ENCODE measurements at regions of chr17 and their contacts with region 1.

Region 1: GRCh38 chr17:74864866-74865395 is 5.2 kb upstream of the GRIN2C start:
- DNase-seq: peak; percentile 64 to 81
- H3K4me3 ChIP-seq: no peak overlapping the region
- H3K4me3 Mint-ChIP-seq: no peak overlapping the region
- H3K27ac Mint-ChIP-seq: no peak overlapping the region
- H3K4me1 ChIP-seq: peaks cover 31% of the 10 kb centered on the region
- H3K4me1 Mint-ChIP-seq: peaks cover 8% of the 10 kb centered on the region
- H3K27me3 ChIP-seq: peaks cover 6% of the 10 kb centered on the region
- H3K27me3 Mint-ChIP-seq: peaks cover 6% of the 10 kb centered on the region
- CTCF ChIP-seq: peak; percentile 93 to 97

Region 2: DNA sequence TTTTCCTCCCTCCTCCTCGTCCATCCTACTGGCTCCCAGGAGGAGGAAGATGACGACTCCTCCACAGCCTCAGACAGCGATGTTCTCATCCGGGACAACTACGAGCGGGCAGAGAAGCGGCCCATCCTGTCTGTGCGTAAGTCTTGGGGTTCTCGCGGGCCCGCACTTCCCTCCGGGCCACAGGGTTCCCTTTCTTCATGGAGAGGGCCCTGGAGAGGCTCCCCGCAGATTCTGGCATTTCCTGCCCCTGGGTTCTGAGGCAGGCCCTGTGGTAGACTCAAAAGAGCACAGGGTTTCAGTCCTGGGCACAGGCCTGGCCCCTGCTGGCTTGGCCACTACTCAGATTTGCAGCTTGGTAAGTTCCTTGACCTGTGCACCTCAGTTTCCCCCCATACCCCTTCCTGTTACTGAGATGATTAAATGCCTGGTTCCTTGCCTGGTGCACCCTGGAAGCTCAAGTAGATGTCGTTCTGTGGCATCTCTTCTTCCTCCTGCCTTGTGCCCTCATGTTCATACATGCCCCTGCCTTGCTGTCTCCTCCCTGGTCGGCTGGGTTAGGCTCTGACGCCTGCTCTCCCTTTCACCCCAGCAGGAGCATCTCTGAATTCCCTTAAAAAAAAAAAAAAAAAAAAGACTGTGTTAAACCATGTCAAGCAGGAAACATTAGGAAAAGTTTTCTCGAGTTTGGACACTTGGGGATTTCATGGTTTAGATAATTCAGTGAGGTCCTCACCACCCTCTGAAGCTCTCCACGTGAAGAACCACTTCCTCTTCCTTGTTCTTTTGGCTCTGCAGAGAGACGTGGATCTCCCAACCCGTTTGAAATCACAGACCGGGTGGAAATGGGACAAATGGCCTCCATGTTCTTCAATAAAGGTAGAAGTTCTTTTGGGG is 74.5 kb before region 1 on chr17:
- CTCF ChIA-PET with region 1: interaction called, 16 read pairs
- POLR2A ChIA-PET with region 1: no interaction called
- intact Hi-C with region 1: loop called (anchors 1 kb)
- DNase-seq: no peak
- H3K4me3 ChIP-seq: no peak overlapping the region
- H3K4me3 Mint-ChIP-seq: no peak overlapping the region
- H3K27ac Mint-ChIP-seq: no peak overlapping the region
- H3K4me1 ChIP-seq: no peaks in the 10 kb centered on the region
- H3K4me1 Mint-ChIP-seq: no peaks in the 10 kb centered on the region
- H3K27me3 ChIP-seq: no peaks in the 10 kb centered on the region
- H3K27me3 Mint-ChIP-seq: no peaks in the 10 kb centered on the region
- CTCF ChIP-seq: no peak

Region 3: DNA sequence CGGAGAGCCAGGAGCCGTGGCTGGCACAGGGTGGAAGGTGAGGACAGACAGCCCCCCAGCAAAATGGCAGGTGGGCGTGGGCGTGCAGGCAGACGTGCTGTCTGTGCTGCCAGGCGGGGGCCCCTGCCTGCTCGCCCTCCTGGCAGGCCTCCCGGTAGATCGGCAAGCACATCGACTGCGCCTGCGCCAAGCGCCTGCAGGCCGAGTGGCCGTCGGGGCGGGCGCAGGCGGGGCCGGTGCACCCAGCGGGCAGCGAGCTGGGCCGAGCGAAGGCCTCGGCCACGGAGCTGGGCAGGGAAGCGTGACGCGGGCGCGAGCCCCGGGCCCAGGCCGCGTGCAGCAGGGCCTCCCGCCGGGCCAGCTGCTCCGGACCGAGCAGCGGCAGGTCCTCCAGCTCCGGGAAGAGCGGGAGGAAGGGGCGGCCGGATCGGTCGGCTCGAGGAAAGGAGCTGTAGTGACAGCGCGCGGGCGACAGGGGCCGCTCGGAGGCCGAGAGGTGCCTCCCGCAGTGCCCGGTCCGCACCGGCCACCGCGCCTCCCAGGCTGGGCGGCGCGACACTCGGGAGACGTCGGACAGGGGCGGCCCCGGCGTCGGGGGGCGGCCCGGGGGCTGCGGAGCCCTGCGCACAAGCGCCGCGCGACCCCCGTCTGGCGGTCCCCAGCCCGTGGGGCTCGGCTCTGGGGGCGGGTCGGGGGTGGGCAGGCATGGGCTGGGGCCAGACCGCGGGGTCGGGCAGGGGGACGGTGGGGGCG is 22.2 kb before region 1 on chr17:
- CTCF ChIA-PET with region 1: interaction called, 43 read pairs
- POLR2A ChIA-PET with region 1: no interaction called
- intact Hi-C with region 1: no loop called
- DNase-seq: peak in 1 of 2 experiments; percentile 81
- H3K4me3 ChIP-seq: peak overlapping the region; percentile 35
- H3K4me3 Mint-ChIP-seq: peak overlapping the region; percentile 39
- H3K27ac Mint-ChIP-seq: no peak overlapping the region
- H3K4me1 ChIP-seq: no peaks in the 10 kb centered on the region
- H3K4me1 Mint-ChIP-seq: no peaks in the 10 kb centered on the region
- H3K27me3 ChIP-seq: no peaks in the 10 kb centered on the region
- H3K27me3 Mint-ChIP-seq: no peaks in the 10 kb centered on the region
- CTCF ChIP-seq: peak; percentile 62 to 69

Region 4: DNA sequence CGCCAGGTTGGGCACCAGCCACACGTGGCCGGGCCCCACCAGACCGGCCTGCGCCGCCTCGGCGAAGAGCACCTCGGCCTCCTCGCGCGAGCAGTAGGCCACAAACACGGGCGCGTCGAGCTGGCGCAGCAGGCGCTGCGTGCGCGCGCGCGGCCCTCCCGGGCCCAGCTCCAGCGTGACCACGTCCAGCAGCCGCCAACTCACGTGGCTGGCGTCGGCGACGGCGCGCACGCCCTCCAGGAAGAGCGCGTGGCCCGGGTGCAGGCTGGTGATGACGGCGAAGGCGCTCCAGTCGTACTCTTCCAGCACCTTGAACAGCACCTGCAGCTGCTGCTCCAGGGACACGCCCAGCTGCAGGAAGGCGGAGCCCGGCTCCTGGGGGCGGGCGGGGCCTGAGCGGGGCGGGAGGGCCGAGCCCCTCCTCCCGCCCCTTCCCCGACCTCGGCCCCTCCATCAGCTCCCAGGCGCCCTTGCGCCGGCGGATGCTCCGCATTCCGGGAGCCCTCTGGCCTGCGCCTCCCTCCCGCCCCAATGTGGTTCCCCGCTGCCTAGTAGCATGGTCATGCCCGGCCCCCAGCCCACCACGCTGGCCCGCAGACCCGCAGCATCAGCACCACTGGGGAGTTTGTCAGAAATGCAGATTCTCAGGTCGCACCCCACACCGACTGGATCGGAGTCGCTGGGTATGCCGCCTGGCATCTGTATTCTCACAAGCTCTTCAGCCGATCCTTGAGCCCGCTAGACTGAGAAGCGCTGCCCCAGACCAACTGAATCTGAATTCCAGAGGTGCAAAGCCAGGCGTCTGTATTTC is 12.5 kb before region 1 on chr17:
- CTCF ChIA-PET with region 1: interaction called, 43 read pairs
- POLR2A ChIA-PET with region 1: interaction called, 12 read pairs
- intact Hi-C with region 1: no loop called
- DNase-seq: peak; percentile 93 to 94
- H3K4me3 ChIP-seq: peak overlapping the region; percentile 62
- H3K4me3 Mint-ChIP-seq: peak overlapping the region; percentile 82
- H3K27ac Mint-ChIP-seq: peak overlapping the region; percentile 63
- H3K4me1 ChIP-seq: peaks cover 8% of the 10 kb centered on the region
- H3K4me1 Mint-ChIP-seq: peaks cover 7% of the 10 kb centered on the region
- H3K27me3 ChIP-seq: 0 out of 2 replicates have a peak, but pooled peaks cover 2% of the 10 kb centered on the region
- H3K27me3 Mint-ChIP-seq: peaks cover 16% of the 10 kb centered on the region
- CTCF ChIP-seq: no peak

Measured in Caco-2 (cell line).